ENCODE measurements at regions of chr13 and their contacts with region 1.

Region 1: DNA sequence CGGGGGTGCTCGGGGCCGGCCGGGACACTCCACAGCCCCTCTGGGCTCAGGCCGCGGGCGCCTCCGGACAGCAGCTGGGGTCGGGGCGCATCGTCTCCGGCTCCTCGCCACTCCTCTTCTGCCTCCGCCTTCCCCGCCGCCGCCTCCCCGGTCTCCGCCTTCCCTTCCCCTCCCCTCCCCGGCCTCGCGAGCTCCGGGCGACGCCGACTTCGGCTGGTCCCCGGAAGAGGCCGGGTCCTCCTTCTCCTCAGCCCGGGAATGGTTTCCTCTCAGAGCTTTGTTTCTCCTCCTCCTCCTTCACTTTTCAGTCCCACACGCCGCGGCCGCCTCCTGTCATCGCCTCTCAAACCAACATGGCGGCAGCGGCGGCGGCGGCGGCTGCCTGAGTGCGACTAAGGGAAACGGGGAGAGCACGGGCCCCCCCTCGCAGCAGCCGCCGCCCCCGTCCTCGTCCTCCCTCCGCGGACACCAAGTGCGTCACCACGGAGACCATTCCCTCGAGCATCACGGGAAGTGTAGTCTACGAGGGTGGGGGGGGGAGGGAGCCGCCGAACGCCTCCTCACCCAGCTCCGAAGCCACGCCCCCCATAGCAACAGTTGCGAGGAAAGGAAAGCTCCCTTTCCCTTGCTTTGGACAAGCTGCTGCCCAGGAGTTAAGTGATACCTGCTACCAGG is at the start of gene UBL3:
- DNase-seq: peak; percentile 71
- H3K4me3 ChIP-seq: peak within 1 kb of the TSS; percentile 75
- H3K27me3 ChIP-seq: no peaks in the 10 kb centered on the region
- CTCF ChIP-seq: no peak
- polyA plus RNA-seq, gene UBL3: 18.0 and 33.0 TPM in 2 replicates

Region 2: DNA sequence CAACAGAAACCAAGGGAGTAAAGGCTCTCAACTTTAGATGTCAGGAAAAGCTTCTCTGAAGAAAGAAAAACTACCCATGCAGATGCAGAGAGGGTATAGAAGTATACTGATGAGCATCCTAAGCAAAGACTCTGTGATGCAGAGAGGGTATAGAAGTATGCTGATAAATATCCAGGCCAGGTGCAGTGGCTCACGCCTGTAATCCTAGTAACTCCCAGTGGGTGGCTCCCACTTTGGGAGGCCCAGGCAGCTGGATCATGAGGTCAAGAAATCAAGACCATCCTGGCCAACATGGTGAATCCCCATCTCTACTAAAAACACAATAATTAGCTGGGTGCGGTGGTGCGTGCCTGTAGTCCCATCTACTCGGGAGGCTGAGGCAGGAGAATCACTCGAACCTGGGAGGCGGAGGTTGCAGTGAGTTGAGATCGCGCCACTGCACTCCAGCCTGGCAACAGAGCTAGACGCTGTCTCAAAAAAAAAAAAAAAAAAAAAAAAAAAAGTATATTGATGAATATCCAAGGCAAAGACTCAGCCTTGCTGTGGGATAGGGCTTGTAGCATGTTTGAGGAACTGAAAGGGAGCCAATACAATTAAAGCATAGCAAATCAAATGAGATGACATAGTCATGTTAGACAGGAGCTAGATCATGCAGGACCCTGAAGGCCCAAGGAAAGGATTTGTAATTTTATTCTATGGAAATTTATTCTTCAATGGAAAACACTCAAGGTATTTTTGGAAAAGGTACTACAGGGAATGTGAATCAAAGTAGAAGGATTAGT is 14.9 kb before region 1 on chr13:
- CTCF ChIA-PET with region 1: interaction called, 3 read pairs
- POLR2A ChIA-PET with region 1: interaction called, 13 read pairs
- DNase-seq: no peak
- H3K4me3 ChIP-seq: no peak overlapping the region
- H3K27me3 ChIP-seq: no peaks in the 10 kb centered on the region
- CTCF ChIP-seq: no peak

Region 3: GRCh38 chr13:30114571-30115256 is 264.4 kb after region 1 on chr13:
- CTCF ChIA-PET with region 1: interaction called, 103 read pairs
- POLR2A ChIA-PET with region 1: no interaction called
- DNase-seq: no peak
- H3K4me3 ChIP-seq: peak overlapping the region; percentile 43
- H3K27me3 ChIP-seq: no peaks in the 10 kb centered on the region
- CTCF ChIP-seq: peak; percentile 90

Measured in BJ (cell line).